ENCODE measurements at regions of chr19 and their contacts with region 1.

Region 1: GRCh38 chr19:37906869-37907734 is at the start of gene SIPA1L3:
- DNase-seq: peak; percentile 98
- H3K4me3 ChIP-seq: peak within 1 kb of the TSS; percentile 96
- H3K27ac ChIP-seq: peak within 1 kb of the TSS; percentile 85
- H3K4me1 ChIP-seq: peaks cover 64% of the 10 kb centered on the region
- CTCF ChIP-seq: no peak
- total RNA-seq, gene SIPA1L3: 21.2 and 36.3 TPM in 2 replicates

Region 2: DNA sequence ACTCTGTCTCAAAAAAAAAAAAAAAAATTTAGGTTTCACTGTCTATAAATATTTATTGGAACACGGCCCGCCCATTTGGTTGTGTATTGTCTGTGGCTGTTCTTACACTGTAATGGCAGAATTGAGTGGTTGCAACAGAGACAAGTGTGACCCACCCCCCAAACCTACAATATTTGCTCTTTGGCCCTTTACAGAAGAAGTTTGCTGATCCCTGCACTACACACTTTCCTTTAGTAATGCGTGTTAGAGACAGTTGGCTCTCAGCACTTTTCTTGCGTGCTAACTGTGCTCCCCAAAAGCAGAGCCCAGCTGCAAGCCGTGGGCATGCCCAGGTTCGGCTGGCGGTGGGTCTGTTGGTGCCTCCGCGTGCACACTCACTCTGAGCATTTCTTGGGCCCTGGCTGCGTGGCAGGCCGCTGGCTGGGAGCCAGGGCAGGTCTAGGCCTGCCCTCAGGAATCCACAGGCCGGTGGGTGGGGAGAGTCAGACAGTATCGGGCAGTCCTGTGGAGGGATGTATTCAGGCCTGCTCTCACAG is 72.5 kb after region 1 on chr19:
- CTCF ChIA-PET with region 1: interaction called, 6 read pairs
- POLR2A ChIA-PET with region 1: interaction called, 7 read pairs
- intact Hi-C with region 1: loop called (anchors 1 kb)
- DNase-seq: peak; percentile 81
- H3K4me3 ChIP-seq: peak overlapping the region; percentile 56
- H3K27ac ChIP-seq: peak overlapping the region; percentile 100
- H3K4me1 ChIP-seq: peaks cover 90% of the 10 kb centered on the region
- CTCF ChIP-seq: no peak

Region 3: GRCh38 chr19:38004521-38005223 is 97.6 kb after region 1 on chr19:
- CTCF ChIA-PET with region 1: interaction called, 5 read pairs
- POLR2A ChIA-PET with region 1: interaction called, 10 read pairs
- intact Hi-C with region 1: no loop called
- DNase-seq: peak; percentile 93
- H3K4me3 ChIP-seq: peak overlapping the region; percentile 67
- H3K27ac ChIP-seq: peak overlapping the region; percentile 72
- H3K4me1 ChIP-seq: peaks cover 56% of the 10 kb centered on the region
- CTCF ChIP-seq: no peak

Region 4: GRCh38 chr19:38095411-38096308 is 188.6 kb after region 1 on chr19:
- CTCF ChIA-PET with region 1: no interaction called
- POLR2A ChIA-PET with region 1: no interaction called
- intact Hi-C with region 1: loop called (anchors 1 kb)
- DNase-seq: peak; percentile 73
- H3K4me3 ChIP-seq: no peak overlapping the region
- H3K27ac ChIP-seq: no peak overlapping the region
- H3K4me1 ChIP-seq: peaks cover 7% of the 10 kb centered on the region
- CTCF ChIP-seq: peak; percentile 81

Region 5: DNA sequence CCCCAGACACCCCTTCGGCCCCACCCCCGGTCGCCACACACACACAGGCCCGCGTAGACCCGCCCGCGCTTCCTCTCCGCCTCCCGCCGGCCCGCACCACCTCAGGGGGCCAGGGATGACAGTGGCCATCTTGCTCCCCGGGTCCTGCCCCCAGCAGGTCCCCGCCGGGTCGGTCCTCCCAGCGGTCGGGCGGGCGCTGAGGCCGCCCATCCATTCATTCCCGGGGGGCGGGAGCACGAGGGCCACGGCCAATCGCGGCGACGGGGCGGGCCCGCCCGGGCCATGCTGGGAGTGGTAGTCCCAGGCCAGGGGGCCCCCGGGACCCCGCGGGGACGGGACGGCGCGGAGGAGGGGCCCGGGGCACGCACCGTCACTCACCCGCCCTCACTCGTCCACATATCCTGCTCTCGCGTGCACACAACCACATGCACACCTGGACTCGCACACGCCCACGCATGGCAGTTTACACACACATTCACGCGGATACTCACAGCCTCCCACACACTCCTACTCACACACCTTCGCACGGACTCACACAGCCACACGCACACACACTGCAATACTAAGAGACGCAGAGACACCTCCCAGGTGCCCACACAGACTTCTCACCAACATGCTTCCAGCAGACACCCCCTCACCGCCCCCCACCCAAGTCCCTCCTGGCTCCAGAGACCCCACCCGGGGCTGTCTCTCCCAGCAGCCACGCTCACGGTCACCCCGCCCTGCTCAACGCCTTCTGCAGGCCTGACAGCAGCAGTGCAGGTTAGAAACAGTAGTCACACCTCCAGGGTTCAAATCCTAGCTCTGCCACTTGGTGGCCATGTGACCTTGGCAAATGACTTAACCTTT is 317.1 kb after region 1 on chr19 and contains the start of gene DPF1:
- CTCF ChIA-PET with region 1: interaction called, 3 read pairs
- POLR2A ChIA-PET with region 1: no interaction called
- intact Hi-C with region 1: loop called (anchors 1 kb)
- DNase-seq: peak; percentile 88
- H3K4me3 ChIP-seq: peak within 1 kb of the TSS; percentile 76
- H3K27ac ChIP-seq: no peak within 1 kb of the TSS
- H3K4me1 ChIP-seq: peaks cover 26% of the 10 kb centered on the region
- CTCF ChIP-seq: peak; percentile 76
- total RNA-seq, gene DPF1: 6.5 and 7.6 TPM in 2 replicates

Measured in OCI-LY7 (cell line).